Posterior cingulate gyrus (tissue), 11 donors: ENCODE measurements at regions of chr4 and their contacts with region 1.

Region 1: GRCh38 chr4:82555276-82555675 is 6.5 kb downstream of the TMEM150C start:
- DNase-seq: no peak

Region 2: GRCh38 chr4:82493721-82494425 is 61.4 kb before region 1 on chr4:
- intact Hi-C with region 1: loop called (anchors 10 kb)
- DNase-seq: no peak

Region 3: DNA sequence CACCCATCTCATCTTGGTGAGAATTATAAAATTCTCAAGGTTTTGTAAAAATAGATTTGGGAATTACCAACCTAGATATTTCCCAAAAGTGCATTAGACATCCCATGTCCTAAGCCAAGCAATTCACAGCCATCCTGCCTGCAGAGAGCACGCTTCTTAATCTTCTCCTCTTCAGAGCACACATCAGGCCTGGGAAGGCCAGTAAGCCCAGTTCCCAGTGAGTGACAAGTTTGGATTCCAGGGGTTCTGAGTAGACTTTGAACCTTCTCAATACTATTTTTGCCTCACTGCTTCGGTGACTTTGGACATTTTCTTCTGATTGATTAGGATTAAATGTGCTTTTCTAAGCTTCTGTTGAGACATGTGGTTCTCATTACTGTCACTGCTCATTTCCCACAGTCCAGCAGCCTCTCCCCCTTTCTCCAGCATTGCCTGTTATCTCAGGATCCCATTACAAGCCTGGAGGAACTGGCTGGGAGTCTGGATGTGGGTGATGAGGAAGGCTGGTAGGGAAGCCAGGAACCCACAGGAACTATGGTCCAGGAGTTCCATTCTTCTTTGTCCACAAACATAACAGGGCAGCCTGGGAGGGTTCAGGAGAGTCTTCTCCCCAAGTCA is 62.9 kb after region 1 on chr4:
- intact Hi-C with region 1: no loop called
- DNase-seq: no peak

Region 4: GRCh38 chr4:82811838-82812341 is 256.6 kb after region 1 on chr4:
- intact Hi-C with region 1: no loop called
- DNase-seq: no peak